Common myeloid progenitor, CD34-positive (primary cell): ENCODE measurements at regions of chr7 and their contacts with region 1.

Region 1: GRCh38 chr7:82593780-82594179 is 150.2 kb upstream of the CACNA2D1 start:
- DNase-seq: peak in 2 of 3 donors; percentile 67 to 82
- H3K4me3 ChIP-seq: no peak overlapping the region
- H3K27ac ChIP-seq: no peak overlapping the region
- H3K4me1 ChIP-seq: peaks cover 5 to 38% (median 20%) of the 10 kb centered on the region in 4 experiments
- H3K27me3 ChIP-seq: no peaks in the 10 kb centered on the region

Region 2: DNA sequence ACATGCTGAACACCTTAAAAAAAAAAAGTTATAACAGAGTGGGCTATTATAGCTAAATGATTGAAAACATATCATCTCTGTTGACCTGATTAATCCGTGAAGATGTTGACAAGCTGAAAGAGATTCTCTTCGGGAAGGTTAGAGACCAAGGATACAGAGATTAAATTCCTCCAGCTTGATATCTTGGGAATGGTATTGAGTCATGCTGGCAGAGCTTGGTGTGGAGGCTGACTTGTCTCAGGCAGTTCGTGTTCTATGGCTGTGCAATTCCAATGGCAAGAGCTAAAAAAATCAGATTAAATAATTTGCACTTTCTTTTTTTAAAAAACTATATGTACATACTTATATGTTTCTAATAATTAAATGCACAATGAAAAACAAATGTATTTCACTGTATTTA is 125.3 kb before region 1 on chr7:
- CTCF ChIA-PET with region 1: no interaction called
- POLR2A ChIA-PET with region 1: no interaction called
- DNase-seq: no peak
- H3K4me3 ChIP-seq: no peak overlapping the region
- H3K27ac ChIP-seq: no peak overlapping the region
- H3K4me1 ChIP-seq: no peaks in the 10 kb centered on the region
- H3K27me3 ChIP-seq: no peaks in the 10 kb centered on the region

Region 3: DNA sequence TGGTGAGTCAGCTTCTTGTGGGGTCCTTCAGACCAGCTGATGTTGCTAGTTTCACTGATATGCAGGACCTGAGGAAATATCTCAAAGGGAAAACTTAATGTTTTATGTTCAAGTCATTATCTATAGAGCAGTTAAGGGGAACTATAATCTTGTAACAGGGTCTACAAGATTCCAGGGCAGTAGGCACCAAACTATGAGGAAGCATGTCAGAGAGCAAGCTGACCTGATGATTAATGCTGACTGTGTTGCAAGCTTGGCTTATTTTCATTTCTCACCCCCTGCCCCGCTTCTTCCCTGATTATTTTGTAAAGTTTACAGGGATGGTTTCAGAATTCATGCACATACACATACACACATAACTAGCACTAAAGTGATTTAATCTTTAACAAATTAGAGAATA is 65.9 kb before region 1 on chr7:
- CTCF ChIA-PET with region 1: no interaction called
- POLR2A ChIA-PET with region 1: no interaction called
- DNase-seq: peak in 1 of 3 donors; percentile 10
- H3K4me3 ChIP-seq: no peak overlapping the region
- H3K27ac ChIP-seq: no peak overlapping the region
- H3K4me1 ChIP-seq: no peaks in the 10 kb centered on the region
- H3K27me3 ChIP-seq: no peaks in the 10 kb centered on the region

Region 4: GRCh38 chr7:82572195-82572880 is 21.4 kb before region 1 on chr7:
- CTCF ChIA-PET with region 1: interaction called, 14 read pairs
- POLR2A ChIA-PET with region 1: no interaction called
- DNase-seq: peak; percentile 78 to 84 (median 82)
- H3K4me3 ChIP-seq: peak overlapping the region in 2 of 7 experiments; percentile 6 to 43
- H3K27ac ChIP-seq: no peak overlapping the region
- H3K4me1 ChIP-seq: no peaks in the 10 kb centered on the region
- H3K27me3 ChIP-seq: no peaks in the 10 kb centered on the region